ENCODE measurements at regions of chr12 and their contacts with region 1.

Region 1: DNA sequence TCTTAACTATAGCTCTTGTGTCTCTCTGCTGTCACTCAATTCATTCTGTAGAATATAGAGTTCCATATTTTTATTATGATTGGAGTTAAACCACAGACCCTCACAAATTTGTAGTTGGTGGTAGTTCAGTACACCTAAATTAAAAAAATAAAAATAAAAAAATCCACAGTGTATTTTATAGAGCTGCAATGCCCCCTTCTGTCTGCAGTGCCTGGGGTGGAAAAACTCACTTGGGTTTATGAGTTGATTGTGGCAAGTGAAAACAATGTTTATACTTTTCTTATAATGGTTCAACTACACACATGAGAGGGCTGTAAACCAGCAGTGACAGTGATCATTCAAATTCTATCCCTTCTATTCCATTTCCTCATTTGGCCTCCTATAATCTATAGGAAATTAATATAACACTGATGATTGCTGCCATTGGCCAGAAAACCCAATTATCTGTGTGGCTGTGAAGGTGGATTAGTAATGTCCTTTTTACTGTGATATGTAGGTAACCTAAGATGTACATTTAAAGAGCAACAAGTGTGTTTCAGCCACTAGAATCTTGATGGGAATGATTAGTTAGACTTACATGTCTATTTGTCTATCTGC is 166.9 kb upstream of the LRIG3 start:
- DNase-seq: no peak
- H3K4me3 ChIP-seq: no peak overlapping the region
- H3K27ac ChIP-seq: no peak overlapping the region
- H3K27me3 ChIP-seq: peaks cover 0 to 4% (median 0%) of the 10 kb centered on the region in 45 donors
- CTCF ChIP-seq: peak in 54 of 56 donors; percentile 35 to 76 (median 53)

Region 2: GRCh38 chr12:58346032-58346632 is 741.0 kb before region 1 on chr12:
- intact Hi-C with region 1: loop called in 1 of 2 experiments (anchors 5 kb)
- DNase-seq: no peak
- H3K4me3 ChIP-seq: peak overlapping the region in 1 of 59 donors; percentile 9
- H3K27ac ChIP-seq: no peak overlapping the region
- H3K27me3 ChIP-seq: peaks cover 0 to 17% (median 0%) of the 10 kb centered on the region in 45 donors
- CTCF ChIP-seq: peak; percentile 78 to 97 (median 88)

Region 3: DNA sequence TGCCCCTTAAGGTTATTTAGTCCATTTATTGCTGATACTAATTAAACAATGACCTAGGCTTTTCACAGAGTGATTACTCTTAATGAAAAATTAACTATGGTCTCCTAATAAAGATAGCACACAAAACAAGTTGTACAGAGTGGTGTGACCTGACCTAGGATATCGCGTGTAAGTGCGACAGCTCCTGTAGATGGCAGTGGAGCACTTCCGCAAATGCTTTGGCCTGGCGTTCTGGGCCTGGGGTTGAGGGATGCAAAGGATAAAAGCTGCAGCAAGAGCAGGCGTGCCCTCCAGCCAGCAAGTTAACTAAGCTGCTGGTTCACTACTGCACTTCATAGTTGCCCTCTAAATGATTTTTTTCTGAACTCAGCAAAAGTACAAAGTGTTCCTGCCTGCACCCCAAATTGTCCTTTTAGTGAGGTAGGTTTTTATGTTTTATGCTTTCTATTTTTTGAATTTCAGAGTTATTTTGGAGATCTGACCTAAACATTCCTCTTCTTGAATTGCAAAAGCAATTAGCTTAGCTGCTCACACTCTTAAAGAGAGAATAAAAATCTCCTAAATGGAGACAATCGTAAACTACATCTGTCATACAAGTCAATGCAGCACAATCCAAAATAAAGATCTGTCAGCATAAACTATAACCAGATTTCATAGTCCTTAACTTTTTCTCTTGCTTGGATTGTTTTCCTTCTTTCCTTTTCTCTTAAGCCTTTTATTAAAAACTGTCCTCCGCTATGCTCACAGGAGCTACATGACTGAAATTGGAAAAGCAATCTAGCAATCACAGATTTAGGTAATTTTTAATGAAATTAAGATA is 546.5 kb before region 1 on chr12:
- intact Hi-C with region 1: loop called (anchors 5 kb)
- DNase-seq: peak; percentile 6 to 81 (median 66)
- H3K4me3 ChIP-seq: no peak overlapping the region
- H3K27ac ChIP-seq: no peak overlapping the region
- H3K27me3 ChIP-seq: no peaks in the 10 kb centered on the region
- CTCF ChIP-seq: peak; percentile 36 to 87 (median 72)

Region 4: DNA sequence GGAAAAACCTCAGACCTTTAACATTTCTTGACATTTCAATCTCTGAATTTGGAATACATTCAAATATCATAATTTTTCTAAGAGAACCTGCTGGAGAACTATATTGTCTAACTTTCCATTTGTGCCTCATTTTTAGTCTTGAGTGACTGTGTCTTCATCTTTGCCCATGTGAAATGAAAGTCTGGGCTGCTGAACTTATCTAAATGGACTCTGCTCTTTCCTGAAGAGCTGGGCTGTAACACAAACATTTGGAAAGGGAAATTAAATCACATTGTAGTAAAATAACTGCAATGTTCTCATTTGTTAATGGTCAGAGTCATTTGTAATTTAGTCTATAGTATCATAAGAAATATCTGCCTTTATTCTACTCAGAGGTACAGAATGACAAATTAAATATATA is 540.0 kb before region 1 on chr12:
- intact Hi-C with region 1: loop called (anchors 5 kb)
- DNase-seq: no peak
- H3K4me3 ChIP-seq: no peak overlapping the region
- H3K27ac ChIP-seq: no peak overlapping the region
- H3K27me3 ChIP-seq: peaks cover 0 to 3% (median 0%) of the 10 kb centered on the region in 45 donors
- CTCF ChIP-seq: no peak

Region 5: GRCh38 chr12:58833853-58834252 is 253.3 kb before region 1 on chr12:
- intact Hi-C with region 1: loop called in 1 of 2 experiments (anchors 10 kb)
- DNase-seq: no peak
- H3K4me3 ChIP-seq: no peak overlapping the region
- H3K27ac ChIP-seq: no peak overlapping the region
- H3K27me3 ChIP-seq: no peaks in the 10 kb centered on the region
- CTCF ChIP-seq: peak in 51 of 56 donors; percentile 7 to 76 (median 46)